ENCODE measurements at regions of chr4 and their contacts with region 1.

Region 1: GRCh38 chr4:94446386-94446785 is 5.4 kb upstream of the PDLIM5 start:
- H3K4me3 Mint-ChIP-seq: no peak overlapping the region
- H3K27ac Mint-ChIP-seq: no peak overlapping the region
- H3K4me1 Mint-ChIP-seq: no peaks in the 10 kb centered on the region
- H3K27me3 Mint-ChIP-seq: peaks cover 11% of the 10 kb centered on the region

Region 2: DNA sequence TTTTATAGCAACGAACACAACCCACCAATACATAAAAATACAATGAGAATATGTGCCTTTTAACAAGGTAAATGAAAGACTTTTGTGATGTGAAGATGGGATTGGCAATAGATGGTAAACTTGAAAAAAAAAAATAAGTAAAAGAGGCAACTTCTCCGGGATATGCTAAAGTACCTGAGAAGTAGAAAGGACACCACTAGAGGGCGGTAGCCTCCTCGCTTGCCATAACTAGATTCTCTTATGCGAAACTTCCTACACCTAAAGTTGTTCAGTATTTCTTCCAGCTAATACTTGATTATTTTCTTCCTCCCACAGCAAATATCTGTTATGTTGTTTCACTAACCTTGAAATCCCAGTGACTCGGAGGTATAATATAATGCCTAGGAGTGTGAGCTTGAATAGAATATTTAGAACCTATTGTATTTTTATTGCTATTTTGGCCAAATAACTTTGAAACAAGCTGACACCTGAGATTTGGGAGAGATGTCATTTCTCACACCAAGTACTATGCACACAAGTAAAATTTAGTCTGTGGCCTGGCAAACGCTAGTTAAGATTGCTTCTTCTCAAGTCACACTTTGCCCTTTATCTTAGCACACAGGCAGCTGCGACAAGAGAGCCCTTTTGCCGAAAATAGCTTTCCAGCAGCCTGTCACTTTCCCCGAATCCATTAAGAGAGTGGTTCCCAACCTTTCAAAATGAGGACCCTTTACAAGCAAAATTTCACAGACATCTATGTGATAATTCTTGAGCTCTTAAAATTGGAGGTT is 39.5 kb before region 1 on chr4:
- intact Hi-C with region 1: loop called (anchors 5 kb)
- H3K4me3 Mint-ChIP-seq: no peak overlapping the region
- H3K27ac Mint-ChIP-seq: no peak overlapping the region
- H3K4me1 Mint-ChIP-seq: no peaks in the 10 kb centered on the region
- H3K27me3 Mint-ChIP-seq: no peaks in the 10 kb centered on the region

Measured in dendritic cell treated with granulocyte-macrophage colony-stimulating factor and Interleukin-4, amounts not matched to agents 40 ng/mL and 50 ng/mL, for 4 days (primary cell).